ENCODE measurements at regions of chr19 and their contacts with region 1.

Region 1: GRCh38 chr19:57099199-57099661 is 20.6 kb upstream of the USP29 start:
- DNase-seq: peak; percentile 87
- H3K4me3 ChIP-seq: no peak overlapping the region; a peak in 1 of 4 replicates
- H3K27ac ChIP-seq: no peak overlapping the region
- H3K4me1 ChIP-seq: peaks cover 0 to 4% of the 10 kb centered on the region in 2 experiments; a peak in 1 of 4 replicates
- H3K27me3 ChIP-seq: no peaks in the 10 kb centered on the region
- CTCF ChIP-seq: peak; percentile 50
- EP300 ChIP-seq: no peak
- RAD21 ChIP-seq: peak; percentile 80

Region 2: DNA sequence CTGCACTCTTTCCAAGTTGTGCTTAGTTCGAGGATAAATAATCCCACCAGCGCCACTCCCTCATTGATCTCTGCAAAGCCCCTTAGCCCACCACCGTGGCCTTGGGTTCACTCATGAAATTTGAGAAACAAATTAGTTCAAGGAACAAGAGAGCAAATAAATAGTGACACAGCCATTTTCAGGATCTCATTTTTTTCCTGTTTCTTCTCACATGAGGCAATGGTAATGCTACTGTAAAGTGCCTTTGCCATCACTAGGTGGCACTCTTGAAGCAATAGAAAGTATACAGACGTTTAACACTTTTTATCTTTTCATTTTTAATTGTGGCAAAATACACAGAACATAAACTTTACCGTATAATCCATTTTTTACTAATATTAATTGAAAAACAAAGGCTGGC is 350.9 kb before region 1 on chr19:
- CTCF ChIA-PET with region 1: interaction called, 22 read pairs
- POLR2A ChIA-PET with region 1: no interaction called
- DNase-seq: peak; percentile 40
- H3K4me3 ChIP-seq: peak overlapping the region in 1 of 2 experiments; percentile 26; a peak in 1 of 4 replicates
- H3K27ac ChIP-seq: no peak overlapping the region
- H3K4me1 ChIP-seq: no peaks in the 10 kb centered on the region; a peak in 1 of 4 replicates
- H3K27me3 ChIP-seq: no peaks in the 10 kb centered on the region
- CTCF ChIP-seq: peak; percentile 41
- EP300 ChIP-seq: no peak
- RAD21 ChIP-seq: peak; percentile 66

Region 3: DNA sequence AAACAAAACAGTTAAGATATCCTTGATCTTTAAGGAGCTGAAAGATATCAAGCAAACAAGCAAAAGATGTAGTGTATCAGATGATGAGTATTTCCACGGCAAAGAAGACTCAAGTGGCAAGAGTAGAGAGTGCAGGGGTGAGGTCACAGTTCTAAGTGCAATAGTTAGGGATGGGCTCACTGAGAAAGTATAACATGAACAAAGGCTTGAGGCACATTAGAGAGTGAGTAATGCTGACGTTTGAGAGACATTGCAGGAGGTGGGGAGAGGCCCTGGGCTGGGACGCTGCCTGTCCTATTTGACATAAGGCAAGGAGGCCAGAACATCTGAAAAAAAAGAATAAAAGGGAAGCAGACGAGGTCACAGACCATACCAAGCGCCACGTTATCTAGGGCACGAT is 66.6 kb after region 1 on chr19:
- CTCF ChIA-PET with region 1: no interaction called
- POLR2A ChIA-PET with region 1: no interaction called
- DNase-seq: no peak
- H3K4me3 ChIP-seq: no peak overlapping the region
- H3K27ac ChIP-seq: no peak overlapping the region
- H3K4me1 ChIP-seq: no peaks in the 10 kb centered on the region
- H3K27me3 ChIP-seq: no peaks in the 10 kb centered on the region; the same call in 1 of the 2 replicates
- CTCF ChIP-seq: no peak
- EP300 ChIP-seq: no peak
- RAD21 ChIP-seq: no peak

Measured in SK-N-SH (cell line).